ENCODE measurements at regions of chr18 and their contacts with region 1.

Region 1: DNA sequence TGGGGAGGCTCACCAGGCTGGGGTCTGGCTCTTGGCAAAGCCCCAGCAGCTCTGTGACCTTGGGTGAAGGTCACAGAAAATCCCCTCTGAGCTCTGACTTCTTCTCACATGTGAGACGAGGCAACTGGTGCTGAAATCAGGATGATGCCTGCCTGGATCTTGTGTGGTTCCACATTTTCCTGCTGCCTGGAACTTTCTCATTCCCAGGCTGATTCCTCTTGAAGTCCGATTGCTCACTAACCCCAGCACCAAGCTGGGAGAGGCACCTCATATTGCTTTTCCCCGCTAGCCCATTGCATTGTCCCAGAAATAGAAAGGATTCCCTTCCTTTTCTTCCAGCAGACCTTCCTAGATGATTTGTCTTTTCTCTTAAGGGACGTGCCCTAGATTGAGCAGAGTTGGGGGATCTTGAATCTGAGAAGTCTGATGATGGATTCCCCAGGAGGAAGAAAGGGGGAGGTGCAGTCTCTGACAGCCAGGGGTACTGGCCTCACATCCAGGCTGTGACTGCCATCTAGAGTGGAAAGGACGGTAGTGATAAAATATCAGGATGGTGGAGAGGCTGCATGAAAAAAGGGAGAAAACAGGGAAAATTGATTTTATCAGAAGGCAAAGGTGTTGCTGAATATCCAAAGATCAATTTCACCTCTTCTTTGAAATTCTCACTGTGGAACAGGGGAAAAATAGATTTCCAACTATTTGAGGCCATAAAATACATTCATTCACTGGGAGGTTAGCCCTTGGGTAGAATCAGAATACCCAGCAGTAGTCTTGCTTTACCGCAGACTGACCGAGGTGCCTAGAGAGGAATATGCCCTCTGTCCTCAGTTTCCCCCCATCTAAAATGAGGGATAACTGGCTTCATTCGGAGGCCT is 96.3 kb downstream of the FAM210A start:
- DNase-seq: peak; percentile 43
- H3K4me3 ChIP-seq: no peak overlapping the region
- H3K27ac ChIP-seq: no peak overlapping the region
- H3K4me1 ChIP-seq: no peaks in the 10 kb centered on the region
- H3K27me3 ChIP-seq: no peaks in the 10 kb centered on the region
- CTCF ChIP-seq: peak; percentile 61 to 81

Region 2: GRCh38 chr18:13003466-13003896 is 626.6 kb before region 1 on chr18:
- CTCF ChIA-PET with region 1: no interaction called
- dilution Hi-C with region 1: no loop called
- in situ Hi-C with region 1: no loop called
- intact Hi-C with region 1: loop called (anchors 1 kb)
- DNase-seq: peak; percentile 48
- H3K4me3 ChIP-seq: no peak overlapping the region
- H3K27ac ChIP-seq: no peak overlapping the region
- H3K4me1 ChIP-seq: no peaks in the 10 kb centered on the region
- H3K27me3 ChIP-seq: no peaks in the 10 kb centered on the region
- CTCF ChIP-seq: peak; percentile 36 to 50

Region 3: GRCh38 chr18:13112982-13113381 is 517.1 kb before region 1 on chr18:
- CTCF ChIA-PET with region 1: no interaction called
- dilution Hi-C with region 1: no loop called
- in situ Hi-C with region 1: no loop called
- intact Hi-C with region 1: loop called (anchors 10 kb)
- DNase-seq: peak; percentile 32
- H3K4me3 ChIP-seq: no peak overlapping the region
- H3K27ac ChIP-seq: no peak overlapping the region
- H3K4me1 ChIP-seq: no peaks in the 10 kb centered on the region
- H3K27me3 ChIP-seq: no peaks in the 10 kb centered on the region
- CTCF ChIP-seq: peak; percentile 42 to 44

Region 4: DNA sequence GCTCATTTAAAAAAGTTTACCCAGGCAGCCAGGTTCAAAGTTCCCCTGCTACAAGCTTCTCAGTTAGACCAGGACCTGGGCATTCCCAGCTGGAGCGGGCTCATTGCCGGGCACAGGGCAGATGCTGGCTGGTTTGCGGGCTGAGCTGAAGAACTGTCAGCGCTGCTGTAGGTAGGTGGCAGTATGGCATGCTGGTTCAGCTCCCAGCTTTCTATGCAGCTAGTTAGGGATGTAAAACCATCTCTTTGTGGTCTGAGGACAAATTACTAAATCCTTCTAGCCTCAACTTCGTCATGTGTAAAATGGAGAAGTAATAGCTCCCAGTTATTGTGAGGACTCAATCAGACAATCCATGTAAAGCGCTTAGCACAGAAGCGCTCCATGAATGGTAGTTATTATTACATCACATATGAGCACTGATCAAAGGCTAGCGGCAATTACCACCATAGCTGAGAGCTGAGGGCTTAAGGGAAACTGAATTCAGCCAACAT is 413.9 kb before region 1 on chr18:
- CTCF ChIA-PET with region 1: no interaction called
- dilution Hi-C with region 1: no loop called
- in situ Hi-C with region 1: no loop called
- intact Hi-C with region 1: loop called (anchors 1 kb)
- DNase-seq: peak; percentile 42
- H3K4me3 ChIP-seq: no peak overlapping the region
- H3K27ac ChIP-seq: no peak overlapping the region
- H3K4me1 ChIP-seq: peaks cover 6% of the 10 kb centered on the region
- H3K27me3 ChIP-seq: peaks cover 24% of the 10 kb centered on the region
- CTCF ChIP-seq: peak; percentile 35 to 73

Region 5: GRCh38 chr18:13558124-13558523 is 72.0 kb before region 1 on chr18:
- CTCF ChIA-PET with region 1: no interaction called
- dilution Hi-C with region 1: loop called (anchors 5 kb)
- in situ Hi-C with region 1: loop called in 1 of 2 experiments (anchors 5 kb)
- intact Hi-C with region 1: loop called (anchors 1 kb)
- DNase-seq: peak; percentile 29
- H3K4me3 ChIP-seq: no peak overlapping the region
- H3K27ac ChIP-seq: no peak overlapping the region
- H3K4me1 ChIP-seq: no peaks in the 10 kb centered on the region
- H3K27me3 ChIP-seq: no peaks in the 10 kb centered on the region
- CTCF ChIP-seq: peak; percentile 67 to 70

Region 6: DNA sequence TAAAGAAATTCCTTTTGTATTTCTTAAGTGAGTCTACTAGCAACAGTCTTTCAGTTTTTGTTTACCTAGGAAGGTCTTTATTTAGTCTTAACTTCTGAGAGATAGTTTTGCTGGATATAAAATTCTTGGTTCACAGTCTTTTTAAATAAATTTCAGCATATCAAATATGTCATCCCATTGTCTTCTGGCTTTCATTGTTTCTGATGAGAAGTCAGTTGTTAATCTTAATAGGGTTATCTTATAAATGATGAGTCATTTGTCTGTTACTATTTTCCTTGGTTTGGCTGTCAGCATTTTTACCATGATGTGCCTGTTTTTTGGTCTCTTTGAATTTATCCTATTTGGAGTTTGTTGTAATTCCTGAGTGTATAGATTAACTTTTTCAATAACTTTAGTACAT is 33.0 kb before region 1 on chr18:
- CTCF ChIA-PET with region 1: no interaction called
- dilution Hi-C with region 1: loop called (anchors 5 kb)
- in situ Hi-C with region 1: no loop called
- intact Hi-C with region 1: no loop called
- DNase-seq: no peak
- H3K4me3 ChIP-seq: no peak overlapping the region
- H3K27ac ChIP-seq: no peak overlapping the region
- H3K4me1 ChIP-seq: no peaks in the 10 kb centered on the region
- H3K27me3 ChIP-seq: no peaks in the 10 kb centered on the region
- CTCF ChIP-seq: no peak

Region 7: GRCh38 chr18:13680612-13681011 is 50.5 kb after region 1 on chr18:
- CTCF ChIA-PET with region 1: no interaction called
- dilution Hi-C with region 1: no loop called
- in situ Hi-C with region 1: no loop called
- intact Hi-C with region 1: no loop called
- DNase-seq: no peak
- H3K4me3 ChIP-seq: no peak overlapping the region
- H3K27ac ChIP-seq: no peak overlapping the region
- H3K4me1 ChIP-seq: no peaks in the 10 kb centered on the region
- H3K27me3 ChIP-seq: no peaks in the 10 kb centered on the region
- CTCF ChIP-seq: peak in 1 of 2 donors; percentile 30